ENCODE measurements at regions of chr7 and their contacts with region 1.

Region 1: GRCh38 chr7:74275401-74275881 is 13.8 kb upstream of the CLIP2 start:
- DNase-seq: peak in 1 of 2 experiments; percentile 62
- ATAC-seq: peak; percentile 40 to 55; a peak in 3 of 6 replicates
- H3K4me3 ChIP-seq: no peak overlapping the region
- H3K27ac ChIP-seq: peak overlapping the region; percentile 13 to 79; a peak in 4 of 6 replicates
- H3K4me1 ChIP-seq: peaks cover 56% of the 10 kb centered on the region
- CTCF ChIP-seq: peak; percentile 51
- EP300 ChIP-seq: no peak
- POLR2A ChIP-seq: no peak
- RAD21 ChIP-seq: peak; percentile 48 to 51; a peak in 4 of 5 replicates

Region 2: GRCh38 chr7:74183613-74184450 is 91.6 kb before region 1 on chr7:
- CTCF ChIA-PET with region 1: no interaction called
- POLR2A ChIA-PET with region 1: no interaction called
- DNase-seq: peak; percentile 41 to 55
- ATAC-seq: peak; percentile 73 to 77; a peak in 5 of 6 replicates
- H3K4me3 ChIP-seq: no peak overlapping the region
- H3K27ac ChIP-seq: no peak overlapping the region
- H3K4me1 ChIP-seq: peaks cover 33% of the 10 kb centered on the region
- CTCF ChIP-seq: peak; percentile 52
- EP300 ChIP-seq: no peak
- POLR2A ChIP-seq: no peak
- RAD21 ChIP-seq: peak; percentile 15 to 41; a peak in 2 of 5 replicates

Region 3: DNA sequence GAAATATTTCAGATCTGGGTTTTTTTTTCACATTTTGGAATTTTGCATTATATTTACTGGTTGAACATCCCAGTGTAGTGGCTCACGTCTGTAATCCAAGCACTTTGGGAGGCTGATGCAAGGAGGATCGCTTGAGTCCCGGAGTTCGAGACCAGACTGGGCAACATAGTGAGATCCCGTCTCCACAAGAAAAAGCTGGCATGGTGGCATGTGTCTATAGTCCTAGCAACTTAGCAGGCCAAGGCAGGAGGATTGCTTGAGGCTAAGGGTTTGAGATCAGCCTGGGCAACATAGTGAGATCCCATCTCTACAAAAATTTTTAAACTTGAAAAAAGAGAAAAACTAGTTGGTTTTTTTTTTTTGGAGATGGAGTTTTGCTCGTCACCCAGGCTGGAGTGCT is 27.3 kb before region 1 on chr7:
- CTCF ChIA-PET with region 1: no interaction called
- POLR2A ChIA-PET with region 1: no interaction called
- DNase-seq: no peak
- ATAC-seq: no peak
- H3K4me3 ChIP-seq: no peak overlapping the region
- H3K27ac ChIP-seq: no peak overlapping the region
- H3K4me1 ChIP-seq: peaks cover 4% of the 10 kb centered on the region; the same call in 1 of the 3 replicates
- CTCF ChIP-seq: no peak
- EP300 ChIP-seq: no peak
- POLR2A ChIP-seq: no peak
- RAD21 ChIP-seq: no peak

Region 4: DNA sequence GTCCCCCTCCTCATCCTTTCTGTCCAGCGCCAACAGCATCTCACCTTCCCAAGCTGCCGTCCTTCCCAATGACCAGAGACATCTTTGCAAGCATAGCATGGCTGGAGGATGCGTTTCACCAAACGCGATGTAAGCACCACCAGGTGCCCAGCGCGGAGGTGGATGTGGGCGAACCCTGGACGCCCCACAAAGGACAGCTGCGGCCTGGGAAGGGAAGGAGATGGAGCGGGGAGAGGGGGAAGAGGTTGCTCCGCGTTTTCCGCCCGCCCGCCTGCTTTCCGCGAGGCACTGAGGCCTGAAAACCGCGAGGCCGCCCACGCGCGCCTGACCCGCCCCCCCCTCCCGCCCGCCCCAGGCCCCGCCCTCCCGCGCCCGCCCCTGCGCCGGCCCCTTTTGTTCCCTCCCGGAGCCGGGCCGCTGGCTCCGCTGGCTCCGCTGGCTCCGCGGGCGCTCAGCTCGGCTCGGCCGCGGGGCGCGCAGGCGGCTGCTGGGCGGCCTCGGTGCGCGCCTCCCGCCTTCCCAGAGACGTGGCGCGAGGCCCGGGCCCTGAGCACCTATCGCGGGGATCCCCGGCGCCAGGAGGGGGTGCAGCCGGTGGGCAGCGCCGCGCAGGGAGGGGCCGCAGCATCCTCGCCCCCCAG is 13.7 kb after region 1 on chr7 and contains the start of gene CLIP2:
- CTCF ChIA-PET with region 1: interaction called, 14 read pairs
- POLR2A ChIA-PET with region 1: interaction called, 10 read pairs
- DNase-seq: peak; percentile 64 to 83
- ATAC-seq: peak; percentile 73 to 77
- H3K4me3 ChIP-seq: peak within 1 kb of the TSS; percentile 88
- H3K27ac ChIP-seq: peak within 1 kb of the TSS; percentile 89 to 97
- H3K4me1 ChIP-seq: peaks cover 61% of the 10 kb centered on the region
- CTCF ChIP-seq: no peak
- EP300 ChIP-seq: no peak
- POLR2A ChIP-seq: peak; percentile 71
- RAD21 ChIP-seq: peak in 1 of 2 experiments; percentile 48; a peak in 3 of 5 replicates
- polyA plus RNA-seq, gene CLIP2: 3.7 and 5.7 TPM in 2 replicates